ENCODE measurements at regions of chr14 and their contacts with region 1.

Region 1: DNA sequence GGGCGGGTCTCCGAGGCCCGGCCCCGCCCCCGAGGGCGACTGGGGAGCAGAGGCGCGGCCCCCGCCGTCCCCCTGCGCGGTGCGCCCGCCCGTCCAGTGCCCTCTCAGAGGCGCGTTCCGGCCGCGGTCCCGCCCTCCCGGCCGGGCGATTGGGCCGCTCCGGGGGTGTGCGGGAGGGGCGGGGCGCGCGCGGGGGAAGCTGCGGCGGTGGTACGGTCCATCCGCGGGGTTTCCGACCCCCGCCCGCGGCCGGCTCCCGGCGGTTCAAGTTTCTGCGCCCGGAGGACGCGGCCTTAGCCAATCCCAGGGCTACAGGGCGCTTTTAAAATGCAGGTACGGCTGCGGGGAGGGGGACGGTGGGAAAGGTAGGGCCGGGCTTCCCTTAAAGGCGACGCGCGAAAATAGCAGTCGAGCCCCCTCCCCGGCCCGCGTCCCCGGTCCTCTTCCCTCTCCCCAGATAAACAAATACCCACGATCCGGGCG is 317 bp upstream of the CCDC85C start:
- DNase-seq: peak; percentile 96
- H3K4me3 Mint-ChIP-seq: peak overlapping the region; percentile 88
- H3K27ac Mint-ChIP-seq: peak overlapping the region; percentile 88
- H3K4me1 Mint-ChIP-seq: peaks cover 24% of the 10 kb centered on the region
- H3K27me3 Mint-ChIP-seq: peaks cover 12% of the 10 kb centered on the region

Region 2: GRCh38 chr14:99480917-99481744 is 123.2 kb before region 1 on chr14 and contains the start of gene CCNK:
- intact Hi-C with region 1: loop called (anchors 1 kb)
- DNase-seq: peak; percentile 100
- H3K4me3 Mint-ChIP-seq: peak within 1 kb of the TSS; percentile 98
- H3K27ac Mint-ChIP-seq: peak within 1 kb of the TSS; percentile 98
- H3K4me1 Mint-ChIP-seq: peaks cover 49% of the 10 kb centered on the region
- H3K27me3 Mint-ChIP-seq: no peaks in the 10 kb centered on the region
- total RNA-seq, gene CCNK: 80.8 and 87.1 TPM in 2 replicates

Region 3: DNA sequence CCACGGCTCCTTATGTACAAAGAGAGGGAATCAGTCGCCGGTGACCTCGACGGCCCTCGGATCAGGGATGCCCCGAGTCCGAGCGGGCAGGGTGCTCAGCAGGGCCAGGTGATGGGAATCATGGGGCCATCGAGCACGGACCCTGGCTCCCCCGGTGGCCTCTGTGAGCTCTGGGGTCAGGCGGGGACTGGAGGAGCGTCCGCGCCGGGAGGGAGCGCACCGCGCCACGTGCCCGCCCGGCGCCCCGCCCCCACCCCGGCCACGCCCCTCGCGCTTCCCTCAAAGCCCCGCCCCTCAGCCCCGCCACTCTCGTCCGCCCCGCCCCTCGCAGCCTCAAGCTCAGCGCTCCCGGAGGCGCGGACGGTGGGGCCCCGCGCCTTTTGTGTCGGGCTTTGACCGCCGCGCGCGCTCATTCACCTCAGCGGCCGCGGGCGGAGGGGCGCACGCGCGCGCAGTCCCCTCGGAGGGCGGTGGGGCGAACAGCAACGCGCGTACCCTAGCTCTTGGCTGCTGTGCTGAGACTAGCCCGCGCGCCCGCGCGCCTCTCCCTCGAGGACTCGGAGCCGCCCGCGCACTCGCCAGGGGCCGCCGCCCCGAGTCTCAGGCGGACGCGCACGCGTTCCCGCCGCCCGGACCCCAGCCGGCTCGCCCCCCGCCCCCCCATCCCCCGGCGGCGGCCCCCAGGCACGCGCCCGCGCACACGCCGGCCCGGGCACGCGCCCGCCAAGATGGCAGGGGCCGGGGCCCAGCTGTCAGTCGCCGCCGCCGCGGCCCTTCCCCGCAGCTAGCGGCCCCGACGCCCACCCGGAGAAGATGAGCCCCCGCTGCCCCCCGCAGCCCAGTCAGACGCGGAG is 367.0 kb after region 1 on chr14:
- intact Hi-C with region 1: loop called (anchors 2 kb)
- DNase-seq: peak; percentile 68
- H3K4me3 Mint-ChIP-seq: peak overlapping the region; percentile 80
- H3K27ac Mint-ChIP-seq: no peak overlapping the region
- H3K4me1 Mint-ChIP-seq: peaks cover 13% of the 10 kb centered on the region
- H3K27me3 Mint-ChIP-seq: peaks cover 21% of the 10 kb centered on the region

Measured in activated T-helper 1 cell treated with anti-CD3 and anti-CD28 coated beads, Interleukin-12 subunit alpha, Interleukin-12 subunit beta, Interleukin-2, Interleukin-4 antibody, amounts not matched to agents 30 ng/mL and 10 ng/mL and 1 ng/mL, durations not matched to agents 14 hours and 24 hours and 36 hours (primary cell).